B cell (primary cell): ENCODE measurements at regions of chr3 and their contacts with region 1.

Region 1: GRCh38 chr3:184362668-184363540 is 1.4 kb downstream of the POLR2H start:
- DNase-seq: peak; percentile 98
- ATAC-seq: peak; percentile 84
- H3K4me3 ChIP-seq: peak overlapping the region; percentile 68 to 94 (median 76)
- H3K4me3 Mint-ChIP-seq: peak overlapping the region; percentile 90
- H3K27ac ChIP-seq: peak overlapping the region; percentile 79 to 86
- H3K27ac Mint-ChIP-seq: peak overlapping the region; percentile 94
- H3K4me1 ChIP-seq: peaks cover 9 to 17% of the 10 kb centered on the region in 2 donors
- H3K4me1 Mint-ChIP-seq: peaks cover 20% of the 10 kb centered on the region
- H3K27me3 ChIP-seq: no peaks in the 10 kb centered on the region
- H3K27me3 Mint-ChIP-seq: no peaks in the 10 kb centered on the region
- CTCF ChIP-seq: peak; percentile 69

Region 2: DNA sequence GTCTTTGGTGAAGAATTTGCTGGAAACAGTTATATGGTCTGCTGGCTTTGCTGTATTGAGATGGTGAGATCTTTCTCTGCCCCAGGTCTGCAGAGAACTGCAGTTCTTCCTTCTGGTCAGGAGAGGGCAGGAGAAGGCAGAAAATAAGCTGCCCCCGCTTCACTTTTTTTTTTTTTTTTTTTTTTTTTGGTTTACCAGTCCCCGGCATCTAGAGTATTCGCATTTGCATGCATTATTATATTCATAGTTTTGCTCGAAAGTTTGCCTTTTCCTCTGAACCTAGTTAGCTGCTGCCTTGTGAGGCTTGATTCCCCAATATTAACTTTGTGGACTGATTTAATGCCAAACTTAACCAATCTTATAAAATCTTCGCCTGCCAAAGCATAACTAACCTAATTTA is 467.6 kb before region 1 on chr3:
- CTCF ChIA-PET with region 1: no interaction called
- POLR2A ChIA-PET with region 1: no interaction called
- intact Hi-C with region 1: loop called (anchors 1 kb)
- DNase-seq: peak; percentile 73
- ATAC-seq: peak; percentile 96
- H3K4me3 ChIP-seq: no peak overlapping the region
- H3K4me3 Mint-ChIP-seq: no peak overlapping the region
- H3K27ac ChIP-seq: no peak overlapping the region
- H3K27ac Mint-ChIP-seq: no peak overlapping the region
- H3K4me1 ChIP-seq: peaks cover 0 to 2% of the 10 kb centered on the region in 2 donors
- H3K4me1 Mint-ChIP-seq: no peaks in the 10 kb centered on the region
- H3K27me3 ChIP-seq: peaks cover 0 to 9% (median 0%) of the 10 kb centered on the region in 4 experiments
- H3K27me3 Mint-ChIP-seq: peaks cover 37% of the 10 kb centered on the region
- CTCF ChIP-seq: peak; percentile 86

Region 3: DNA sequence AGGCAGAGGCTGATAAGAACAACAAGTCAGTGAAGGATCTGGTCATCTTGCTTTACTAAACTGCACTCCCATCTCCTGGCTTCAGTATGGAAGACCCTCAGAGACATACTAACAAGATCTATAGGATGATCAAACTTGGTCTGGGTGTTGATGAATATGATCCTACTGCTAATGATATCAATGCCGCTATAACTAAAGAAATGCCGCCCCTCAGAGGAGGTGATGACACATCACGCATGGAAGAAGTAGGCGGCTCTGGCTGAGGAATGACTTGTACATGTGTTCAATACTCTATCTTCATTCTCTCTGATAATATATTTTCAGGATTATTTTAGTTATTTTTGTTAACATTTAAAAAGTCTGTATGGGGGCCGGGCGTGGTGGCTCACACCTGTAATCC is 245.3 kb before region 1 on chr3:
- CTCF ChIA-PET with region 1: no interaction called
- POLR2A ChIA-PET with region 1: no interaction called
- intact Hi-C with region 1: no loop called
- DNase-seq: no peak
- ATAC-seq: no peak
- H3K4me3 ChIP-seq: no peak overlapping the region
- H3K4me3 Mint-ChIP-seq: no peak overlapping the region
- H3K27ac ChIP-seq: no peak overlapping the region
- H3K27ac Mint-ChIP-seq: no peak overlapping the region
- H3K4me1 ChIP-seq: no peaks in the 10 kb centered on the region
- H3K4me1 Mint-ChIP-seq: no peaks in the 10 kb centered on the region
- H3K27me3 ChIP-seq: no peaks in the 10 kb centered on the region
- H3K27me3 Mint-ChIP-seq: peaks cover 13% of the 10 kb centered on the region
- CTCF ChIP-seq: no peak

Region 4: DNA sequence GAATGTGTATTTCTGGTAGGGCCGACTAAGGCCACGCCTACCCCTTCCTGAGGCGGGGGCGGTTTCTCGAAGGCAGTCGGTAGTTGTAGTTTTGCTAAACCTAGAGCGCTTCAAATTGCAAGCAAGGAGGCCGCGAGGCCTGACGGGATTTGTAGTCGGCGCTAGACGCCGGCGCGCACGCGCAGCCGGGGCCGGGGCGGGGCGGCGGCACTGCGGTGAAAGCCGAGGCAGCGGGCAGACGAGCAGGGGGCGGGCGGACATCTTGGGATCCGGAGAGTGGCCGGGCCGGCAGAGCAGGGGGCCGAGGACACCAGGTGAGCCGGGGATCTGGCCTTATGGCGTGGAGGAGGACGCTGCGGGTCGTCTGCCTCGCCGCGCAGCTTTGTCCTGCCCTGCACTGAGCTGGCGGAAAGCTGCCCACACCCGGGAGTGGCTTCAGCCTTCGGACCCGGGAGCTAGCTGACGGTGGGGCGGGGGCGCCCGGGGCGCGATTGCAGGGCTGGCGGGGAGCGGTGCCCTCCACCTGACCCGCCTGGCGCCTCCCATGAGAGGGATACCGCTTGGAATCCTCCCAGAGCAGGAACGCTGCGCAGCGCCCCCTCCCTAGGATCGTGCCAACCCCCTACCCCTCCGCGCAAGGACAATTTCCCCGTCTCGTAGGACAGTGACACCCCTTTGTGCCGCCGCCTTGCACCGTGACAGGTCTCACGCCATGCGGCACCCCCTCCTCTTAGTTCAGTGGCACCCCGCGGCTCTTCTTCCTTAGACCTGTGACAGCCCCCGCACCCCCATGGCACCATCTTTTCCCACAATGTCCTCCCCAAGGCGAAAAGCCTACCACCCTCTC is 188.0 kb before region 1 on chr3 and contains the start of gene AP2M1:
- CTCF ChIA-PET with region 1: no interaction called
- POLR2A ChIA-PET with region 1: no interaction called
- intact Hi-C with region 1: loop called (anchors 1 kb)
- DNase-seq: peak; percentile 98
- ATAC-seq: peak; percentile 98
- H3K4me3 ChIP-seq: peak within 1 kb of the TSS; percentile 57 to 100 (median 98)
- H3K4me3 Mint-ChIP-seq: peak within 1 kb of the TSS; percentile 93
- H3K27ac ChIP-seq: peak within 1 kb of the TSS; percentile 56 to 80
- H3K27ac Mint-ChIP-seq: peak within 1 kb of the TSS; percentile 96
- H3K4me1 ChIP-seq: peaks cover 23 to 34% of the 10 kb centered on the region in 2 donors
- H3K4me1 Mint-ChIP-seq: peaks cover 37% of the 10 kb centered on the region
- H3K27me3 ChIP-seq: no peaks in the 10 kb centered on the region
- H3K27me3 Mint-ChIP-seq: no peaks in the 10 kb centered on the region
- CTCF ChIP-seq: no peak
- total RNA-seq, gene AP2M1: 191 and 207 TPM in 2 replicates

Region 5: DNA sequence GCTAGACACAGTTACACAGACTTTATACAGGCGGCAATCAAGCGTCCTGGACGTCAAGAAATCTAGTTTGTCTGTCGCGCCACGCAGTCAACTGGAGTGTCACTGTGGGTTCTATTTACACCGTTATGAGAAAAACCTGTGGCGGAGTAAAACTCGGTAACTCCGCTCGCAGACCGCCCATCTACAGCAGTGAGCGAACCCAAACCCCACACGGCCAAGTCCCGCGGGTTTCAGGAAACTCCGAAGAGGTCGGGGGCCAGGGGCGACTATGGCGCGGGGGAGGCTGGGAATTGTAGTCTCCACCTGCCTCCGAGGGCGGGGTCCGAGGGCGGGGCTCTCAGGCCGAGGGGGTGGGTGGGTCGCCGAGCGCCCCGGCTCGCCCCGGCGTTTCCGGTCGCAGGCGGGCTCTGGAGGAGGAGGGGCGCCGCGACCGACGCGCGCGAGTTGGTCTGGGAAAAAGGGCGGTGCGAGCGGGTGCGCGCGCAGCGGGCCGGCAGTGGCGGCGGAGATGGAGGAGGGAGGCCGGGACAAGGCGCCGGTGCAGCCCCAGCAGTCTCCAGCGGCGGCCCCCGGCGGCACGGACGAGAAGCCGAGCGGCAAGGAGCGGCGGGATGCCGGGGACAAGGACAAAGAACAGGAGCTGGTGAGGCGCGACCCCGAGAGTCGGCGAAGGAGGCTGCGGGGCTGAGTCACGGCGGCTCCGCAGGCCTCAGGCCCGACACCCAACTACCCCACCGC is 64.0 kb before region 1 on chr3 and contains the start of gene PSMD2:
- CTCF ChIA-PET with region 1: interaction called, 3 read pairs
- POLR2A ChIA-PET with region 1: interaction called, 6 read pairs
- intact Hi-C with region 1: loop called (anchors 1 kb)
- DNase-seq: peak; percentile 96
- ATAC-seq: peak; percentile 95
- H3K4me3 ChIP-seq: peak within 1 kb of the TSS; percentile 63 to 92 (median 79)
- H3K4me3 Mint-ChIP-seq: peak within 1 kb of the TSS; percentile 95
- H3K27ac ChIP-seq: peak within 1 kb of the TSS; percentile 65 to 82
- H3K27ac Mint-ChIP-seq: peak within 1 kb of the TSS; percentile 91
- H3K4me1 ChIP-seq: peaks cover 12 to 17% of the 10 kb centered on the region in 2 donors
- H3K4me1 Mint-ChIP-seq: peaks cover 22% of the 10 kb centered on the region
- H3K27me3 ChIP-seq: peaks cover 0 to 2% (median 0%) of the 10 kb centered on the region in 4 experiments
- H3K27me3 Mint-ChIP-seq: peaks cover 6% of the 10 kb centered on the region
- CTCF ChIP-seq: no peak
- total RNA-seq, gene PSMD2: 140 and 145 TPM in 2 replicates

Region 6: GRCh38 chr3:184513276-184514170 is 150.6 kb after region 1 on chr3:
- CTCF ChIA-PET with region 1: interaction called, 107 read pairs
- POLR2A ChIA-PET with region 1: no interaction called
- intact Hi-C with region 1: no loop called
- DNase-seq: peak; percentile 89
- ATAC-seq: peak; percentile 100
- H3K4me3 ChIP-seq: peak overlapping the region in 4 of 5 experiments; percentile 15 to 46 (median 40)
- H3K4me3 Mint-ChIP-seq: peak overlapping the region; percentile 64
- H3K27ac ChIP-seq: no peak overlapping the region
- H3K27ac Mint-ChIP-seq: no peak overlapping the region
- H3K4me1 ChIP-seq: peaks cover 11 to 14% of the 10 kb centered on the region in 2 donors
- H3K4me1 Mint-ChIP-seq: peaks cover 14% of the 10 kb centered on the region
- H3K27me3 ChIP-seq: peaks cover 0 to 33% (median 25%) of the 10 kb centered on the region in 4 experiments
- H3K27me3 Mint-ChIP-seq: peaks cover 70% of the 10 kb centered on the region
- CTCF ChIP-seq: peak; percentile 86

Region 7: GRCh38 chr3:184811999-184812661 is 449.2 kb after region 1 on chr3 and contains the start of gene VPS8:
- CTCF ChIA-PET with region 1: no interaction called
- POLR2A ChIA-PET with region 1: no interaction called
- intact Hi-C with region 1: loop called (anchors 1 kb)
- DNase-seq: peak; percentile 98
- ATAC-seq: peak; percentile 94
- H3K4me3 ChIP-seq: peak within 1 kb of the TSS; percentile 77 to 95 (median 92)
- H3K4me3 Mint-ChIP-seq: peak within 1 kb of the TSS; percentile 93
- H3K27ac ChIP-seq: peak within 1 kb of the TSS; percentile 70 to 76
- H3K27ac Mint-ChIP-seq: peak within 1 kb of the TSS; percentile 96
- H3K4me1 ChIP-seq: peaks cover 16 to 18% of the 10 kb centered on the region in 2 donors
- H3K4me1 Mint-ChIP-seq: peaks cover 28% of the 10 kb centered on the region
- H3K27me3 ChIP-seq: no peaks in the 10 kb centered on the region
- H3K27me3 Mint-ChIP-seq: peaks cover 3% of the 10 kb centered on the region
- CTCF ChIP-seq: peak; percentile 46
- total RNA-seq, gene VPS8: 95.6 and 106 TPM in 2 replicates